Activated B cell treated with CpG ODN at 0.5 μM for 24 hours (primary cell): ENCODE measurements at regions of chr12 and their contacts with region 1.

Region 1: GRCh38 chr12:132414634-132415326 is 75.2 kb upstream of the FBRSL1 start:
- DNase-seq: peak; percentile 68
- ATAC-seq: peak; percentile 96
- H3K4me3 Mint-ChIP-seq: no peak overlapping the region
- H3K27ac Mint-ChIP-seq: no peak overlapping the region
- H3K4me1 Mint-ChIP-seq: peaks cover 9% of the 10 kb centered on the region
- H3K27me3 Mint-ChIP-seq: no peaks in the 10 kb centered on the region
- CTCF ChIP-seq: no peak

Region 2: DNA sequence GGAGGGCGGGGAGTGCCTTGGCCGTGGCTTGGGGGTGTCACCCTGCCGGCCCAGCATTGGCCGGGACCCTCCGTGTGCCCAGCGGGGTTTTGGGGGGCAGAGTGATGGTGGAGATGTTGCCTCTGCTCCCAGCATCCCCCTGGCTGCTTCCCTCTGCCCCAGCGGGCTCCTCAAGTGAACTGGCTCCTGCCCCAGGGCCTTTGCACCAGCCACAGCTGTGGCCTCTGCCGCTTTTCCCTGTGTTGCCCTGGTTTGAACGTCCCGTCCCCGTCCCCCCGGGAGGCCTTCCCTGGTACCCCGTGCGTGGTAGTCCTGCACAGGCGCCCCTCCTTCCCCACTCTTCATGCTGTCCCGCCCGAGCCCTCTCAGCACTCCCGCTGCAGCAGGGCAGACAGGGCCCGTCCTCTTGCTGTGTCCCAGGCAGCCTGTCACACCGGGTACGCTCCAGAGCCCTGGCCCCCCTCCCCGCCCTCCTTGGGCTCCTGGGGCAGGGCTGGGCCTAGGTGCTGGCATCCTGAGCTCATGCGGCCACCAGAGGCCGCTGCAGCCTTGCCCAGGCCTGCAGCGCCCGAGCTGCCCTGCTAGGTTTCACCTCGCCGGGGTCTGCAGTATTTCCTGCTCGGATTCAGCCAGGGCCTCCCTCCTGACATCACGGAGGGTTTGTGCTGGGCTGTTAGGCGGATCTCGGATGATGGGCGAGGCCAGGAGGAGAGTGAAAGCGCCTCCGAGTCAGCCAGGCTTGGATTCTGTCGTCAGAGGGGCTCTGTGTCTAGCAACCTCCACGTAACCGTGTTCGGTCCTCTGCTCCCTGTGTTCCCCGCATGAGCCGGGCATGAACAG is 261.1 kb before region 1 on chr12:
- CTCF ChIA-PET with region 1: interaction called, 23 read pairs
- POLR2A ChIA-PET with region 1: no interaction called
- intact Hi-C with region 1: loop called (anchors 1 kb)
- DNase-seq: peak; percentile 70
- ATAC-seq: peak; percentile 98
- H3K4me3 Mint-ChIP-seq: no peak overlapping the region
- H3K27ac Mint-ChIP-seq: no peak overlapping the region
- H3K4me1 Mint-ChIP-seq: peaks cover 2% of the 10 kb centered on the region
- H3K27me3 Mint-ChIP-seq: no peaks in the 10 kb centered on the region
- CTCF ChIP-seq: peak; percentile 59

Region 3: DNA sequence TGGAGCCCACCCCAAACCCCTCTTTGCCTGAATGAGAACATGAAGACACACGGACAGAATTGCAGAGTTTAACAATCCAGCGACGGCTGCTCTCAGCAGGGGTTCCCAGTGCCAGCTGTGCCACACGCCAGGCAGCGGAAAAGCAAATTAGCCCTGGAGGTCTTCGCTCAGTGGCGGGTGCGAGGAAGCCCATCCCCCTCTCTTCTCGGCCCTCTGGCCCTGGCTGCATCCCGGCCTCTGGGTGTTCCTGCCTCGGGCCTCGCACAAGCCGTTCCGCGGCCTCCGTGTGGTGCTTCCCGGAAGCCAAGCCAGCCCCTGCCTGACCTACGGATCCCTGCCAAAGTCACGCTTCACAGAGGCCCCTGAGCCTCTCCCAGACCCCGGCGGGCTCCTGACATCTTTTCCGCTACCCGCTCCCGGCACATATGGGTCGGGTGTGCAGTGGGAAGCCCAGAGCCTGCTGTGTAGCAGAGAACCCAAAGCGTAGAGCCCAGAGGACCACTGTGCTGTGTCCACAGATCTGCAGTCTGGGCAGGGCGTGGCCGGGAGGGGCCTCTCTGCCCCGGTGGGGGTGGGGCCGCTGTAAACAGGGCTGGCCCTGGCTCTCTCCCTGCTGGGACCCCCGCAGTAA is 14.7 kb before region 1 on chr12:
- CTCF ChIA-PET with region 1: no interaction called
- POLR2A ChIA-PET with region 1: no interaction called
- intact Hi-C with region 1: no loop called
- DNase-seq: no peak
- ATAC-seq: no peak
- H3K4me3 Mint-ChIP-seq: no peak overlapping the region
- H3K27ac Mint-ChIP-seq: no peak overlapping the region
- H3K4me1 Mint-ChIP-seq: peaks cover 2% of the 10 kb centered on the region
- H3K27me3 Mint-ChIP-seq: peaks cover 12% of the 10 kb centered on the region
- CTCF ChIP-seq: no peak

Region 4: DNA sequence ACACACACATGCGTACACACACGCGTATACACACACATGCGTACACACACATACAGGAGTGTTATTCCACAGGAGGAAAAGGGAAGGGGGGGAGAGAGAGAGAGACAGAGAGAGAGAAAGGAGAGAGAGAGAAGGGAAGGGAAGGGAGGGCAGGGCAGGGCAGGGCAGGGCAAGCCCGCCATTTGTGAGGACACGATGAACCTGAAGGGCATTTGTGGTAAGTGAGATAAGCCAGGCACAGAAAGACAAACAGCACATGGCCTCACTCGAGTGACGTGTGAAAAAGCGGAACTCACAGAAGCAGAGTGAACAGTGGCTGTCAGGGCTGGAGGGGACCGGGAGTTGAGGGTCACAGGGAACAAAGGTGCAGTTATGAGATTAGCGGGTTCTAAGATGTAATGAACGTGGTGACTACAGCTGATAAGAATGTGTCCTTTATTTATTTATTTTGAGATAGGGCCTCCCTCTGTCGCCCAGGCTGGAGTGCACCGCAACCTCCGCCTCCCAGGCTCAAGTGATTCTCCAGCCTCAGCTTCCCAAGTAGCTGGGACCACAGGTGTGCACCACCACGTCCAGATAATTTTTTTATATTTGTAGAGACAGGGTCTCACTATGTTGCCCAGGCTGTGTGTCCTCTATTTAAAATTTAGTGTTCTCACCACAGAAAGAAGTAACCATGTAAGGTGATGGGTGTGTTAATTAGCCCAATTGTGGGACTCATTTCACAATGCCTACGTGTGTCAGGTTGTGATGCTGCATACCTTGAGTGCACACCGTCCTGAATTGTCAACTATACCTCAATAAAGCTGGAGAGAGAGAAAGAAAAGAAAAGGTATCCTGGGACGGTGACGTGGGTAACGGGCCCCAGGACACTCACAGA is 56.4 kb after region 1 on chr12:
- CTCF ChIA-PET with region 1: interaction called, 6 read pairs
- POLR2A ChIA-PET with region 1: interaction called, 20 read pairs
- intact Hi-C with region 1: no loop called
- DNase-seq: no peak
- ATAC-seq: peak; percentile 74
- H3K4me3 Mint-ChIP-seq: peak overlapping the region; percentile 55
- H3K27ac Mint-ChIP-seq: peak overlapping the region; percentile 78
- H3K4me1 Mint-ChIP-seq: peaks cover 65% of the 10 kb centered on the region
- H3K27me3 Mint-ChIP-seq: no peaks in the 10 kb centered on the region
- CTCF ChIP-seq: no peak

Region 5: DNA sequence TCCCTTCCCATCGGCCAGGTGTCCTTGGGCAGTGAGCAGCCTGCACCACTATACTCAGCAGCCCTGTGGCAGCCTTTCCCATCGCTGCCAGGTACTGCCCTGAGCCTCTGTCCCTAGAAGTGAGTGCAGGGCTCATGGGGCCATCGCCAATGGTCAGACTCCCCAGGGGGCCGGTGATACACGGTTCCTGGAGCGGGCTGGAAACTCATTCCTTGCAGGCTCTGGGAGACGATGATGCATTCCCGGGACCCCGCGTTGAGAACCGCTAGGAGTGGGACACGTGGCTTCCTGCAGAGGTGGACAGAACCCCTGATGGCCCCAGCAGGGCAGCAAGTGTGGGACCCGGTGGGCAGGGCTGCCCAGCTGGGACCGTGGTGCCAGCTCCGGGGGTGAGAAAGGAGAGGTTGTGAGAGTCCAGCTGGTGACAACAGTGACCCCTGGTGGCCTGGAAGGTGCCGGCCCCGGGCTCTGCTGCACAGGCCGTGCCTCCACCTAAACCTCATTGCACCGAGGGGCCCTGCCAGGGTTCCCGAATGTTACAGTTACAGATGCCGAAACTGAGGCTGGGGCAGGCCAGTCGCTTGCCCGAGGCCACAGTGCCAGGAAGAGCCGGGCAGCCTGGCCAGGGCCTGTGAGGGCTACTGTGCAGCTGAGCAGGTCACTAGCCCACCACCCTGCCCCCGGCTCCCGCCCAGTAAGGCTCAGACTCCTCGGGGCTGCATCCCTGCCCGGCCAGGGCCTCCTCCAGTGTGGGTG is 109.0 kb after region 1 on chr12:
- CTCF ChIA-PET with region 1: interaction called, 105 read pairs
- POLR2A ChIA-PET with region 1: interaction called, 11 read pairs
- intact Hi-C with region 1: loop called (anchors 1 kb)
- DNase-seq: peak; percentile 71
- ATAC-seq: peak; percentile 85
- H3K4me3 Mint-ChIP-seq: no peak overlapping the region
- H3K27ac Mint-ChIP-seq: no peak overlapping the region
- H3K4me1 Mint-ChIP-seq: peaks cover 8% of the 10 kb centered on the region
- H3K27me3 Mint-ChIP-seq: no peaks in the 10 kb centered on the region
- CTCF ChIP-seq: peak; percentile 91

Region 6: DNA sequence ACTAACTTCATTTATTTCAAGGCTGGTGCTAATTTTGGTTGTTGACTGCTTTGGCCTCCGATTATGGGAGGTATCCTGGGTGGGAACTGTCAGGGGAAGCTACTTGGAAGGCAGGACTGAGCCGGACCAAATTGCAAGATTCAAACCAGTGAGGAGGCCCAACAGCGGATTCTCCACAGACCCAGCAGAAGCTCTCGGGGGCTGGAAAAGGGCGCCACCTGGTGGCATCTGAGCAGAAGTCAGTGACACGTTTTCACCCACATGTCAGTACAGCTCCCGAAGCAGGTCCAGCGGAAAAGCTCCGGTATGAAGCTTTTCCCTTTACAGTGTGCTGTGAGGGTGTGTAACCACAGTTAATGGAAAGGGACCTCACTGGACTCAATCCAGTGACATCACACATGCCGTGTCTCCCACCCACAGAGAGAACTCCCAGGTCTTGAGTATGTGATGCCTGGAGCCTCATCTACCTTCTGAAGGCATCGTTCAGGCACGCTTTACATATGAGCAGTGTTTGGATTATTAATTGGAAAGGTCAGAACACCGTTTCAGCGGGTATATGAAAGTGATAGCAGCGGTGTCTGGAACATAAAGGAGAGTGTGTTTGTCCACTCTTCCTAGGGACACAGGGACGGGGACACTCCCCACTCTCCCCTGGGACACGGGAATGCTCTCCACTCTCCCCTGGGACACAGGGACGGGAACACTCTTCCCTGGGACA is 200.2 kb after region 1 on chr12:
- CTCF ChIA-PET with region 1: interaction called, 31 read pairs
- POLR2A ChIA-PET with region 1: no interaction called
- intact Hi-C with region 1: loop called (anchors 1 kb)
- DNase-seq: peak; percentile 71
- ATAC-seq: peak; percentile 87
- H3K4me3 Mint-ChIP-seq: no peak overlapping the region
- H3K27ac Mint-ChIP-seq: peak overlapping the region; percentile 1
- H3K4me1 Mint-ChIP-seq: peaks cover 17% of the 10 kb centered on the region
- H3K27me3 Mint-ChIP-seq: peaks cover 30% of the 10 kb centered on the region
- CTCF ChIP-seq: peak; percentile 99